Panc1 (cell line): ENCODE measurements at regions of chr7 and their contacts with region 1.

Region 1: DNA sequence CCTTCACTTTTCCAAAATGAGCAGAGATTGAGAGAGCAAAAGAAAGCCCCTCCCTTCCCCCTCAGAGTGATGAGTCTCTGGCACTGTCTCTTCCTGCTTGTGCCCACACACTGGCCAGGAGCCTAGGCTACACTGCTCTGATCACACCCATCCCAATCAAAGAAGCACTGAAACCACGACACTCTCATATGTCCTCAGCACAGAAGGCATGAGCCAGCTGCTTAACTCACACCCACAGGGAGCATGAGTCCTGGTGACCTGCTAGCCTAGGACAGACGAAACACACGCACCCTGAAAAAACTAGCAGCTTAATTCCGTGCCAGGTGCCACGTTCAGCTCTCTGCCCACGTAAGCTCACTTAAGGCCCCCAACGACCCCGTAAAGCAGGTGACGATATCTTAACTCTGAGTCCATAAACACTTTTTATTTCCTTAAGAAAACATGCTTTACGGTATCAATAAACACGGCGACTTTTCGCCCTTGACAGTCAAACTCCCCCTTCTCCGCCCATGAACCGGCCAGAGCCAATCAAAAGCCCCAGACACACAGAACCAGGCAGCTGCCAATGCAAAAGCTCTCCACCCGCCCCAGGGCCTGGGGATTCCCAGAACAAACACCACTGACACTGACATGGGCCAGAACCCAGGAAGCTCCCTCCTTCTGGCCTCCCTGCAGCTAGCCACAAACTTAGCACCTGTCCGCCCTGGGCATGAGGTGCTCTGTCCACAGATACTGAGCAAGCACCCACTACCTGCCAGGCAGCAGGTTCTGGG is 69.0 kb downstream of the TNRC18 start:
- DNase-seq: no peak
- ATAC-seq: peak; percentile 39
- H3K4me3 ChIP-seq: no peak overlapping the region
- H3K27ac ChIP-seq: no peak overlapping the region
- H3K4me1 ChIP-seq: 0 out of 2 replicates have a peak, but pooled peaks cover 5% of the 10 kb centered on the region
- H3K27me3 ChIP-seq: no peaks in the 10 kb centered on the region
- CTCF ChIP-seq: no peak

Region 2: DNA sequence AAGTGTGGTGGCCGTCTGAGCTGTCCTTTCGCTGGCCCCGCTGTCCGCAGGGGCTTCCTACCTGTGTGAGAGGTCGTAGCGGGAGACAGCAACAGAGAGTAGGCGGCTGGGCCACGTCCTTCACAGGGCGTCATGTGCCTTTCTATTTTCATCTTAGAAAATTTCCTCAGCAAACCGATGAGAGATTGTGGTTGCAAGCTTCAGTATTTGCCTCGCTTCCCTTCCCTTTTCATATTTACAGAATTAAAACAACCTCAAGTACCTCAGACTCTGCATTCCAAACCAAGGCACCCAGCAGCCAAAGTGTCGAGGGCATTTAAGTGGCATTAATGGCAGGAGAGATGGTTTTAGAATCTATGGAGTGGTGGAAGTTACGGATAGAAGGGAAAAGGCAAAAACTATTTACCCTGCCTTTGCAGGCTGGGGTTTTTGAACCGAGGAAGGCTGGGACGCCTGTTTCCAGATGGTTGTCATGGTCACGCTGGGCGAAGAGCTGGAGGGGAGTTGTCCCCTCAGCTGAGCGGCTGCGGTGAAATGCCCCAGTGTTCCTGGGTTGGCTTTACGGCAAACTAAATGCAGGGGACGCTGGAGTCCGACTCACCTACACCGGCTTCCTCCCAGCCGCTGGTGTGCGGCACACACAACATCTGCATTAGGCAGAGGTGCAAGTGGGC is 122.7 kb before region 1 on chr7:
- CTCF ChIA-PET with region 1: no interaction called
- POLR2A ChIA-PET with region 1: no interaction called
- in situ Hi-C with region 1: no loop called
- intact Hi-C with region 1: no loop called
- DNase-seq: no peak
- ATAC-seq: no peak
- H3K4me3 ChIP-seq: no peak overlapping the region
- H3K27ac ChIP-seq: no peak overlapping the region
- H3K4me1 ChIP-seq: no peaks in the 10 kb centered on the region
- H3K27me3 ChIP-seq: no peaks in the 10 kb centered on the region
- CTCF ChIP-seq: no peak

Region 3: GRCh38 chr7:5677538-5678294 is 323.1 kb after region 1 on chr7:
- CTCF ChIA-PET with region 1: interaction called, 11 read pairs
- POLR2A ChIA-PET with region 1: no interaction called
- in situ Hi-C with region 1: no loop called
- intact Hi-C with region 1: no loop called
- DNase-seq: no peak
- ATAC-seq: peak; percentile 74
- H3K4me3 ChIP-seq: no peak overlapping the region
- H3K27ac ChIP-seq: no peak overlapping the region
- H3K4me1 ChIP-seq: 0 out of 2 replicates have a peak, but pooled peaks cover 3% of the 10 kb centered on the region
- H3K27me3 ChIP-seq: no peaks in the 10 kb centered on the region
- CTCF ChIP-seq: no peak; the same call in 1 of the 2 replicates

Region 4: GRCh38 chr7:5758753-5759335 is 404.2 kb after region 1 on chr7:
- CTCF ChIA-PET with region 1: no interaction called
- POLR2A ChIA-PET with region 1: no interaction called
- in situ Hi-C with region 1: no loop called
- intact Hi-C with region 1: no loop called
- DNase-seq: no peak
- ATAC-seq: no peak
- H3K4me3 ChIP-seq: no peak overlapping the region
- H3K27ac ChIP-seq: no peak overlapping the region
- H3K4me1 ChIP-seq: no peaks in the 10 kb centered on the region
- H3K27me3 ChIP-seq: no peaks in the 10 kb centered on the region
- CTCF ChIP-seq: no peak